ENCODE measurements at regions of chr2 and their contacts with region 1.

Region 1: DNA sequence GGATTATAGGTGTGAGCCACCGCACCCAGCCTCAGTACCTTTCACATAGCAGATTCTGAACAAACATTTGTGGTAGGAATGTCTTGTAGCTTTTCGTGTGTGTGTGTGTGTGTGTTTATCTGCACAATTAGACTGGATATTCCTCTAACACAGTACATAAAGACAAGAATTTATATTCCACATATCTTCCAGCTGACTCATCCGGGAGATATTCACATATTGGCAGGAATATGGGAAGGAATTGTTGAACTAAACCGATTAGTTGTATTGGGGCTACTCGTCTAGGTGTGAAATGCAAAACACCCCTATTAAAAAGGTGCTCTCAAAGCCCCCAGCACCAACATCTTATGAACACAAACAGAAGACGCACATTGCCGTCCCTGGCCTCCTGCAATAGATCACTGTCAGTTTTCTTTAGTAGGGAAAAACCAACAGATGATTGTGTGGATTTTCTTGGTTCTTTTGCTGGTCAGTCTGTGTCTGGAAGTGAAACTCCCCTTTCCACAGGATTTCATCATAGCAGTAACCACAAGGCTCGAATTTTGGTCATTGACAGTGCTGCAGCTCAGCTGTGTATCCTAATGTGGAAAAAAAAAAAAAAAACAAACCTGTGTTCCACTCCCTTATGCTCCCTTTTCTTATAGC is 208.5 kb upstream of the ACVR2A start:
- DNase-seq: peak; percentile 86 to 95 (median 91)
- H3K4me3 ChIP-seq: peak overlapping the region in 2 of 3 experiments; percentile 32 to 62
- H3K4me3 Mint-ChIP-seq: peak overlapping the region; percentile 52 to 83
- H3K27ac ChIP-seq: peak overlapping the region; percentile 55 to 94
- H3K27ac Mint-ChIP-seq: peak overlapping the region; percentile 92 to 98 (median 95)
- H3K4me1 ChIP-seq: peaks cover 48 to 67% of the 10 kb centered on the region in 2 donors
- H3K4me1 Mint-ChIP-seq: peaks cover 5% of the 10 kb centered on the region
- H3K27me3 ChIP-seq: no peaks in the 10 kb centered on the region
- H3K27me3 Mint-ChIP-seq: peaks cover 0 to 1% (median 0%) of the 10 kb centered on the region in 3 donors
- CTCF ChIP-seq: no peak

Region 2: DNA sequence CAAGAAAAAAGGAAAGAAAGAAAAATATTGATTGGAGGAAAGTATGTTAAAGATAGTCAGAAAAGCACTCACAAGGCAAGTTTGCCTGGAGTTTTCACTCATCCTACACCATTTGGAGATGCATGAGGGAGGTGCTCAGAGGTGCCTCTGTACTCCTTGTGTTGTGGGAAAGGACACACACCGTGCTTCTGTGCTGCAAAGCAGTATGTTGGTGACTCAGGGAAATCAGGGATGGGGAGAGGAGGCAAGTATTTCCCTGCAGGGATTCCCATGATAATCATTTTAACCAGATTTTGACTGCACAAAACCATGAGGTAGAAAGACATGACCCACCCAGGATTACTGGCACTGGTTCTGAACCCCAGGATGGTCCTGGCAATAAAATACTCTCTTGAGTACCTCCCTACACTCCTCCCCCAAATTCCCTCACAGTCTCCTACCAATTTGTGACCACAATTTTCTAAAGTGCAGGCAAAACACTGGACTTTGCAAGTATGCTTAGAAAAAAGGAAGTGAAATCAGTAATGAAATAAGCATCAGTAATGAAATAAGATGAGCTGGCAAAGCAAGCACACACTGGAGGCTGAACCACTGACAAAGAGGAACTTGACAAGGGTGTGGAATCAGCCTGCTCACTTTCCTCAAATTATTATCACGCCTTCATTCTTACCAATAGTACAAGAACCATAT is 53.0 kb after region 1 on chr2:
- intact Hi-C with region 1: loop called (anchors 5 kb)
- DNase-seq: peak; percentile 88 to 94 (median 94)
- H3K4me3 ChIP-seq: peak overlapping the region in 1 of 3 experiments; percentile 40
- H3K4me3 Mint-ChIP-seq: peak overlapping the region in 1 of 2 donors; percentile 67
- H3K27ac ChIP-seq: peak overlapping the region; percentile 57 to 84
- H3K27ac Mint-ChIP-seq: peak overlapping the region; percentile 91 to 98 (median 95)
- H3K4me1 ChIP-seq: peaks cover 37 to 45% of the 10 kb centered on the region in 2 donors
- H3K4me1 Mint-ChIP-seq: peaks cover 43% of the 10 kb centered on the region
- H3K27me3 ChIP-seq: no peaks in the 10 kb centered on the region
- H3K27me3 Mint-ChIP-seq: peaks cover 0 to 3% (median 2%) of the 10 kb centered on the region in 3 donors
- CTCF ChIP-seq: no peak

Region 3: GRCh38 chr2:147843864-147844696 is 207.7 kb after region 1 on chr2:
- intact Hi-C with region 1: loop called in 1 of 2 experiments (anchors 5 kb)
- DNase-seq: peak; percentile 83 to 87 (median 86)
- H3K4me3 ChIP-seq: peak overlapping the region; percentile 59 to 83 (median 74)
- H3K4me3 Mint-ChIP-seq: peak overlapping the region; percentile 91 to 98
- H3K27ac ChIP-seq: peak overlapping the region; percentile 77 to 83
- H3K27ac Mint-ChIP-seq: peak overlapping the region; percentile 89 to 95 (median 92)
- H3K4me1 ChIP-seq: peaks cover 26 to 33% of the 10 kb centered on the region in 2 donors
- H3K4me1 Mint-ChIP-seq: peaks cover 38% of the 10 kb centered on the region
- H3K27me3 ChIP-seq: peaks cover 58 to 64% of the 10 kb centered on the region in 2 donors
- H3K27me3 Mint-ChIP-seq: peaks cover 57 to 79% (median 58%) of the 10 kb centered on the region in 3 donors
- CTCF ChIP-seq: no peak